Caco-2 (cell line): ENCODE measurements at regions of chr20 and their contacts with region 1.

Region 1: DNA sequence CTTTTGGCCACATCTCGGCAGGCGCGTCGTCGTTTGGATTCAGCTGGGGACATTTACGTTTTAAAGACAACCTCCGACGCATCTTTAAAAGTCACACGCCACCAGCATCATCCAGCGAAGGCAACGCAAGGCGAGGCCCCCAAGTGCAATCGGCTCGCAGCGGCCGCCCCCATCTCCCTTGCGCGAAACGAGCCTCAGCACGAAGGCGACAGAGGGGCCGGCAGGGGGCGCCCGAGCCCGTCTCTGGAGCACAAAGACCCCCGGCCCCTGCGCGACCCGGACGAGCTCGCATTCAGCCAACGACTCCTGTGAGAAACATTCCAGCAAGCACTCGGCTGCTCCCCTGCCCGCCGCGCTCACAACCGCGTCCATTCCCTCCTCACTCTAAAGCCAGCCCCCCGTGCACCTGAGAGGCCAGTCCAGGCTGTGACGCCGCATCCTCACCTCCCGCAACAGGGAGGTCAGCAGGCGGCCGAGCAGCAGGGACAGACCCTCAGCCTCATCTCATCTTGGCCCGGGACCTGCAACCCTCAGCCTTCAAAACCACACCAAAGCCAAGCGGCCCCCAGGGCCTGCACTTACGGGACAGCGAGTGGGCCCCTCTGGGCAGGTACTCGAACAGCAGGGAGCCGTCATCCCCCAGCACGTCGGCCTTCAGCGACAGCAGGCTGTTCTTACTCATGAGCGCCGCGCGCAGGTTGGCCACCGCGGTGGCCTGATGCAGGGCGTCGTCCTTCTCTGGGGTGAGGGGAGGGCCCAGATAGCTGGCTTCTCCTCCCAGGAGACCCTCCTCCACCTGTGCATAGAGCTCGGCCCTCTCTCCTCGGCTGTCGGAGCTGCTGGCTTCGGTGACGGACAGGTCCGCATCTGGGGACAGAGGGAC is 35.8 kb downstream of the SLC2A4RG start:
- DNase-seq: no peak
- H3K4me3 ChIP-seq: no peak overlapping the region
- H3K4me3 Mint-ChIP-seq: no peak overlapping the region
- H3K27ac Mint-ChIP-seq: peak overlapping the region; percentile 30
- H3K4me1 ChIP-seq: no peaks in the 10 kb centered on the region
- H3K4me1 Mint-ChIP-seq: no peaks in the 10 kb centered on the region
- H3K27me3 ChIP-seq: no peaks in the 10 kb centered on the region
- H3K27me3 Mint-ChIP-seq: no peaks in the 10 kb centered on the region
- CTCF ChIP-seq: peak; percentile 16 to 50

Region 2: GRCh38 chr20:62219992-62220665 is 1555.2 kb before region 1 on chr20 and contains the start of gene HRH3:
- CTCF ChIA-PET with region 1: no interaction called
- POLR2A ChIA-PET with region 1: no interaction called
- intact Hi-C with region 1: loop called (anchors 5 kb)
- DNase-seq: peak in 1 of 2 experiments; percentile 91
- H3K4me3 ChIP-seq: peak within 1 kb of the TSS; percentile 29
- H3K4me3 Mint-ChIP-seq: peak within 1 kb of the TSS; percentile 65
- H3K27ac Mint-ChIP-seq: no peak within 1 kb of the TSS
- H3K4me1 ChIP-seq: peaks cover 26% of the 10 kb centered on the region
- H3K4me1 Mint-ChIP-seq: no peaks in the 10 kb centered on the region
- H3K27me3 ChIP-seq: peaks cover 37% of the 10 kb centered on the region
- H3K27me3 Mint-ChIP-seq: peaks cover 57% of the 10 kb centered on the region
- CTCF ChIP-seq: no peak
- total RNA-seq, gene HRH3: not detected in 2 replicates

Region 3: DNA sequence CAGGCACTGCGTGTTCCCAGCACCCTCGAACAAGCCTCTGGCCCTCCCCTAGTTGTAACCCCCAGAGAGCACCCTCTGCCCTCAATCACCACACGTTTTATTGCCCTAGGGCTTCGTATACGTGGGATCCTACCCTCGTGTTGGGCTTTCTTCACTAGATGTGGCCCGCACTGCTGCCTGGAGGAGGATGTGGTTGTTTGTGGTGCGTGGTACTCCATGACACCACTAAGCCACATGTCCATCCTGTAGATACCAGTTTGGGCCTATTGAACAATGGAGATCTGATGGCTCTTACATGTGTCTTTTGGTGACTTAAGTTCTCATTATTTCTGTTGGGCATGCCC is 18.7 kb before region 1 on chr20:
- CTCF ChIA-PET with region 1: no interaction called
- POLR2A ChIA-PET with region 1: no interaction called
- intact Hi-C with region 1: no loop called
- DNase-seq: no peak
- H3K4me3 ChIP-seq: no peak overlapping the region
- H3K4me3 Mint-ChIP-seq: no peak overlapping the region
- H3K27ac Mint-ChIP-seq: no peak overlapping the region
- H3K4me1 ChIP-seq: no peaks in the 10 kb centered on the region; the same call in 1 of the 2 replicates
- H3K4me1 Mint-ChIP-seq: no peaks in the 10 kb centered on the region
- H3K27me3 ChIP-seq: no peaks in the 10 kb centered on the region
- H3K27me3 Mint-ChIP-seq: no peaks in the 10 kb centered on the region
- CTCF ChIP-seq: no peak

Region 4: GRCh38 chr20:63915471-63915870 is 140.1 kb after region 1 on chr20:
- CTCF ChIA-PET with region 1: no interaction called
- POLR2A ChIA-PET with region 1: no interaction called
- intact Hi-C with region 1: no loop called
- DNase-seq: no peak
- H3K4me3 ChIP-seq: no peak overlapping the region
- H3K4me3 Mint-ChIP-seq: no peak overlapping the region
- H3K27ac Mint-ChIP-seq: no peak overlapping the region
- H3K4me1 ChIP-seq: peaks cover 9% of the 10 kb centered on the region; the same call in 1 of the 2 replicates
- H3K4me1 Mint-ChIP-seq: peaks cover 14% of the 10 kb centered on the region
- H3K27me3 ChIP-seq: no peaks in the 10 kb centered on the region
- H3K27me3 Mint-ChIP-seq: no peaks in the 10 kb centered on the region
- CTCF ChIP-seq: no peak